Gastrocnemius medialis (tissue), 4 donors: ENCODE measurements at regions of chr12 and their contacts with region 1.

Region 1: DNA sequence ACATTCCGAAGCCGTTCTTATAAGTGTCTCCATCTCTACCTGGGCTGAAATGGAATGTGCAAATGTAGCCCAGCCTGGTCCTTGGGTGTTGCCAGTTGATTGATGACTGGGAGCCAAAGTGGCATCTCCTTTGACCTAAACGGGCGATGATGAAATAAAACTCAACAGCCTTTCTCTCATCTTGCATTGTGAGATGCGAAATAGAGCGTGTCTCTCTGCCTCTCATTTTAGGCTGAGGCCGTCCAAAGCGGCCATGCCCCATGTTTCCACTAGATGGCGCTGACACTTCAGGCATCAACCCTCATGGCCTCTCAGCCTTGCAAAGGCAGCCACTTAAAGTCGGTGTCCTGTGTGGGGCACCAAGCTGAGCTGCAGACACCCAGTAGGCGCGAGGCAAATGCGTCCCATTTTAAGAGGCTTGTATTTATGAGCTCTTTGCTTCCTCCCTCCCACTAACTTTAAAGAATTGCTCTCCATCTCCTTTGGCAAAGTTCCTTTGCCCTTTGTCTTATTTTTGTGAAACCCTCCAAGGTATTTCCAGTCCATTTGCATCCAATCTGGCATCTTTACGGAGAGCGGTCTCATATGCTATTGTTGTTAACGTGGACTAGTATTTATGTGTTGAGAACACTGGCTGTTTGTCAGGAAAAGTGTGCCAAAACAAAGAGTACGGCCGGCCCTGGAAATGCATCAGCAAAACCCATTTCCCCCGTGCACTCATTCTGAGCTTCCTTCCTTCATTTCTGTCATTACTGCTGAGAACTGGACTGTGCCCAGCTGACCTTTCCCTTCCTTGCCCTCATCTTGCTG is 25.0 kb downstream of the GPRC5A start:
- DNase-seq: peak; percentile 57 to 72
- ATAC-seq: peak; percentile 82 to 95
- H3K4me3 ChIP-seq: peak overlapping the region in 2 of 4 donors; percentile 0 to 21
- H3K27ac ChIP-seq: peak overlapping the region in 3 of 4 donors; percentile 7 to 39 (median 14)
- H3K4me1 ChIP-seq: no peaks in the 10 kb centered on the region
- H3K27me3 ChIP-seq: no peaks in the 10 kb centered on the region
- CTCF ChIP-seq: peak; percentile 90 to 97 (median 93)
- POLR2A ChIP-seq: no peak

Region 2: DNA sequence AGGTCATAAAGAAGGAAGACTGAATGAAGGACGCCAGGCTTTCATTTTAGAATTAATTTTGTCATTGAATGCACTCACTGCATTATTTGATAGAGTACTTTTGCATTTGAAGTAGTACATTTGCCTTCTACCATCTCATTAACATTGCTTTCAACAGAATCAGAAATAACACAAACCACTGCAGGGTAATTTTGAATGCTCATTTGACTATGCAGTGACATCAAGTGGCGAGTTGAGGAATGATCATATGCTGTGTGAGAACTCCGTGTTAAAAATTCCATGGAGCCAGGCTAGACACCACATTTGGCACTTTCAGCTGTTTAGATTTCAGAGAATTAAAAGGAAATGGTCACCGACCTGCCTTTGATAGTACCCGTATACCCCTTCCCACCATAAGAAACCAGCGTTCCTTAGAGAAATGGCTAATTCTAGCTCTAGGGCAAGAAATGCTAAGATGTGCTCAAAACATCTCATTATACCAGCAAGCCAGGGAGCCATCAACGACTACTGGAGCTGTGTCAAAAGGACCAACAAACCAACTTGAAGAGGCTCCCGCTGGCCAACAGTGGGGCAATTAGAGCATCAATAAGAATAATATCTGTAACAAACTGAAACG is 67.2 kb after region 1 on chr12:
- in situ Hi-C with region 1: loop called in 1 of 4 experiments (anchors 5 kb)
- intact Hi-C with region 1: loop called (anchors 1 kb)
- DNase-seq: no peak
- ATAC-seq: peak; percentile 55 to 68
- H3K4me3 ChIP-seq: no peak overlapping the region
- H3K27ac ChIP-seq: no peak overlapping the region
- H3K4me1 ChIP-seq: no peaks in the 10 kb centered on the region
- H3K27me3 ChIP-seq: no peaks in the 10 kb centered on the region
- CTCF ChIP-seq: peak in 4 of 5 experiments; percentile 6 to 56 (median 42)
- POLR2A ChIP-seq: no peak

Region 3: GRCh38 chr12:12999959-13000615 is 83.7 kb after region 1 on chr12 and contains the start of gene HEBP1:
- in situ Hi-C with region 1: loop called in 1 of 4 experiments (anchors 10 kb)
- intact Hi-C with region 1: no loop called
- DNase-seq: peak; percentile 90 to 91
- ATAC-seq: peak; percentile 94 to 95
- H3K4me3 ChIP-seq: peak within 1 kb of the TSS; percentile 67 to 89 (median 82)
- H3K27ac ChIP-seq: peak within 1 kb of the TSS; percentile 80 to 91 (median 82)
- H3K4me1 ChIP-seq: peaks cover 15 to 18% of the 10 kb centered on the region in 2 donors
- H3K27me3 ChIP-seq: no peaks in the 10 kb centered on the region
- CTCF ChIP-seq: no peak
- POLR2A ChIP-seq: peak; percentile 79 to 84
- total RNA-seq, gene HEBP1: 3.8 to 15.8 (median 9.9) TPM

Region 4: DNA sequence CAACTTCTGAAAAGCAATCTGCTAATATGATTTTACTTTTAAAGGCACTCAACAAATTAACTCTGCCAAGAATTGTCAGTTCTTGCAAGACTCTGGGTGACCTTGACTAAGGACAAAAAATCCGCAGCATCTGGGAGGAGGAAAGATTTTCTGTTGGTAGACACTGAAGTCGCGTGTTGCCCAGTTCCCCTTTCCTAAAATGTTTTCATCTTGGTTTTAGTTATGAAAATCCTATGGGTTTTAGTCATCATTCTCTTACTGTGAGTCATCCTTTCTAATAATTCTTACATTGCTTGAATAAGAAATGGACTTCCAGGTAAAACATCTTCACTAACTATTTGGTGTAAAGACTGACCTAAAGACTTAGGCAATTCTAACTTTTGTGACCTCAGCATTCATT is 178.0 kb after region 1 on chr12:
- in situ Hi-C with region 1: loop called in 1 of 4 experiments (anchors 25 kb)
- intact Hi-C with region 1: no loop called
- DNase-seq: no peak
- ATAC-seq: no peak
- H3K4me3 ChIP-seq: no peak overlapping the region
- H3K27ac ChIP-seq: no peak overlapping the region
- H3K4me1 ChIP-seq: peaks cover 6 to 10% of the 10 kb centered on the region in 2 donors
- H3K27me3 ChIP-seq: no peaks in the 10 kb centered on the region
- CTCF ChIP-seq: no peak
- POLR2A ChIP-seq: no peak

Region 5: DNA sequence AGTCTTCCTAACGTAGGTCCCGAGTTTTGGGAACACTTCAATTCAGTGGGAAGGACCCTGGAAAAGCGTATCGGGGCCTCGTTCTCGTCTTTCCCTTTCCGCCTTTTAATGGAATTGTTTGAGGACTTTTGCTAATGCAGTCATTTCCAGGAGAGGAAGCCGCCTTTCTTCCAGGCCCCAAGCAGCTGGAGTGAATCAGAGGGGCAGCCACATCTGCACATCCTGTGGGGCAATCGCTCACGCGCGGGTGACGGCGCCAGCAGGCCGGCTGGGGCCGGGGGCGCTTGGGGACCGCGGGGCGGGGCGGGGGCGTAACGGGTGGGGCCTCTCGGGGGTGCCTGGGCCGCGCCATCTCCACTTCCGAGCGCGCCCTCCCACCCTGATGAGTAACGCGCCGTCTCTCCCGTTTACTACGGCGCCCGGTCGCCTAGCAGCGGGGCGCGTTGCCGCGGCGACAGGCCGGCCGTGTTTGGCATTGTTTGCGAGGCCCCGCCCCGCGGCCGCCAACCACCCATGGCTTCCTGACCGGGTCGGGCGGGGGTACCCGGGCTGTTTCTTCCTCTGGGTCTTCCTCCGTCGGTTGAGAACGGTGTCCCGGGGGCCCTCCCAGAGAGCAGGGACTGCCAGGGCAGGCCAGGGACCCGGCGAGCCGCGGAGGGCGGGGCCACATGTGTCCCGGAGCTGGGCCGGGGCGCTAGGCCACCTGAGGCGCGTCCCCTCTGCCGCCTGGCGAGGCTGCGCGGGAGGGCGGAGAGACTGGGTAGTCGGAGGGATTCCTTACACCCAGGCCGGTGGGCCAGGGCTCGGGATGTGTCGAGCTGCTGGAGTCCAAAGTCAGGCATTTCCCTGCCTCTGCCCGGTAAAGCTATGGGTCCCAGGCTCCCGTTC is 184.8 kb after region 1 on chr12:
- in situ Hi-C with region 1: loop called in 1 of 4 experiments (anchors 25 kb)
- intact Hi-C with region 1: loop called (anchors 5 kb)
- DNase-seq: peak; percentile 71 to 79
- ATAC-seq: peak; percentile 60 to 62
- H3K4me3 ChIP-seq: peak overlapping the region; percentile 58 to 75 (median 65)
- H3K27ac ChIP-seq: peak overlapping the region; percentile 83 to 84 (median 83)
- H3K4me1 ChIP-seq: peaks cover 19 to 32% of the 10 kb centered on the region in 2 donors
- H3K27me3 ChIP-seq: no peaks in the 10 kb centered on the region
- CTCF ChIP-seq: no peak
- POLR2A ChIP-seq: peak in 1 of 2 donors; percentile 28

Region 6: GRCh38 chr12:13211859-13212664 is 295.7 kb after region 1 on chr12:
- in situ Hi-C with region 1: loop called in 3 of 4 experiments (anchors 5 to 10 kb)
- intact Hi-C with region 1: loop called (anchors 1 kb)
- DNase-seq: no peak
- ATAC-seq: peak; percentile 23 to 55
- H3K4me3 ChIP-seq: no peak overlapping the region
- H3K27ac ChIP-seq: no peak overlapping the region
- H3K4me1 ChIP-seq: peaks cover 22 to 27% of the 10 kb centered on the region in 2 donors
- H3K27me3 ChIP-seq: no peaks in the 10 kb centered on the region
- CTCF ChIP-seq: peak; percentile 51 to 77 (median 55)
- POLR2A ChIP-seq: no peak

Region 7: DNA sequence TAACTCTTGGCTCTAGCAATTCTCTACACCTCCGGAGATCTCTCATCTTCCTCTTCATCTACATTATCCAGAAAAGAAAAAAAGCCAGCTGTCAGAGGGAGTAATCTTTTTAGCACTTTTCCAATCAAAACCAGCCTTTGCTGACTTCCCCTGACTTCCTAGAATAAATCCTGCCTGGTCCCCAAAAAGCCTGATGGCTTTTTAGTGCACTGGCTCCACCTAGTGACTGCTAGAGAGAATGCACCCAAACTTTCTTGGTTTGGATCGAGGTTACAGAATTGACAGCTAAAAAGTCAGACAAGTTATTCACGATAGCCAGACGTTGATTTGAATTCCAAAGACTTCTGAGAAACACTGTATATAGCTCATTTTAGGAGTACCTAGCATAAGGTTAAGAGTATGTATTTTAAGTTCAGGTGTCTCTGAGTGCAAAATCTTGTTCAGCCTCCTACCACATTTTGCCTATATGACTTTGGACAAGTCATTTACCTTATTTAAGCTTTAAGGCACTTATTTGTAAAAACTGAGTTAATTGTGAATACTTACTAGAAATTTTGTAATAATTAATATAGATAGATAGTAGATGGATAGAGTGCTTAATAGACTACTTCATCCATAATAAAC is 1250.8 kb after region 1 on chr12:
- in situ Hi-C with region 1: loop called in 1 of 4 experiments (anchors 25 kb)
- intact Hi-C with region 1: no loop called
- DNase-seq: no peak
- ATAC-seq: peak in 1 of 2 donors; percentile 42
- H3K4me3 ChIP-seq: no peak overlapping the region
- H3K27ac ChIP-seq: no peak overlapping the region
- H3K4me1 ChIP-seq: no peaks in the 10 kb centered on the region
- H3K27me3 ChIP-seq: no peaks in the 10 kb centered on the region
- CTCF ChIP-seq: peak; percentile 43 to 87 (median 69)
- POLR2A ChIP-seq: no peak